ENCODE measurements at regions of chr4 and their contacts with region 1.

Region 1: GRCh38 chr4:146095091-146095690 is 80.3 kb upstream of the LSM6 start:
- DNase-seq: peak; percentile 55
- ATAC-seq: no peak
- H3K4me3 Mint-ChIP-seq: no peak overlapping the region
- H3K27ac Mint-ChIP-seq: no peak overlapping the region
- H3K4me1 Mint-ChIP-seq: no peaks in the 10 kb centered on the region
- H3K27me3 Mint-ChIP-seq: peaks cover 5% of the 10 kb centered on the region
- CTCF ChIP-seq: peak; percentile 89

Region 2: DNA sequence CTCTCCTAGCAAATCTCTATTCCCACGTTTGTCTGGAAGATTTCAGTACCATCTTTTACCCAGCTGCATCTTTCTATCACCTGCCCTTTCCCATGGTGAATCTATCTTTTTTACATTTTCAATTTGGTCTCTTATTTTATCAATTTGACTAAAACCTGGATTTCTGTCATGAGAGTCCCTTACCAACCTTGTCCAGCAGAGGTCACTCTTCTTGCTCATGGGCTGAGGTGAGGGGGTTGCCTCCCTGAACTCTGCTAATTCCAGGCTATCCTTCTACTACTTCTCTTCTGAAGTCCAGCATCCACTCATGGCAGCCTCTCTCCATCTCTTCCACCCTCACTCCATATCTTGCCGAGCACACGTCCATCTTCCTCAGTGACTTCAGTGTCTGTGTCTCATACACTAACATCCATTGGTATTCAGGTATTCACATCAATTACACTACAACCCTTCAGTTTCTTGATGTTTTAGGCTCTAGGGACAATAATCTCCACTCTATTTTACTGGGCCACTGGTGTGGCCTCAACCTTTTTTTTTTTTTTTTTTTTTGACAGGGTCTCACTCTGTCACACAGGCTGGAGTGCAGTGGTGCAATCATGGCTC is 138.8 kb before region 1 on chr4:
- CTCF ChIA-PET with region 1: no interaction called
- POLR2A ChIA-PET with region 1: no interaction called
- intact Hi-C with region 1: no loop called
- DNase-seq: peak; percentile 56
- ATAC-seq: peak; percentile 55
- H3K4me3 Mint-ChIP-seq: no peak overlapping the region
- H3K27ac Mint-ChIP-seq: no peak overlapping the region
- H3K4me1 Mint-ChIP-seq: peaks cover 2% of the 10 kb centered on the region
- H3K27me3 Mint-ChIP-seq: peaks cover 5% of the 10 kb centered on the region
- CTCF ChIP-seq: peak; percentile 74

Region 3: DNA sequence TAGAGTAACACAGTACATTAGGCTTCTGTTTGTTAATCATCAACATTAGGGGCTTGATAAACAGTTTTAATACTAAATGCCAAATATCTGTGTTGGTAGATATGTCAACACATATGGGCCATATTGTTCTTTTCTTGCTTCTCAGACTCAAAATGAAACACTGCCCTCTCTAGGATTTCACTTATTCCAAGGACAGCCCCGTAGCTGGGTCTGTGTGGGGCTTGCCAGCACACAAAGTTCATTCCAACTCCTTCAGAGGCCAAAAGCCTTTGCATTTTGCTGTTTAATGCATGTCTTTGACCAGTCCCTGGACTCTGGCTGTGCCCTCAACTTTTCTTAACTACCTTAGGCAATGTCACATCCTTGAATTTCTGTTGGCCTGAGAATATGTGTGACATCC is 54.6 kb before region 1 on chr4:
- CTCF ChIA-PET with region 1: no interaction called
- POLR2A ChIA-PET with region 1: no interaction called
- intact Hi-C with region 1: no loop called
- DNase-seq: no peak
- ATAC-seq: no peak
- H3K4me3 Mint-ChIP-seq: no peak overlapping the region
- H3K27ac Mint-ChIP-seq: no peak overlapping the region
- H3K4me1 Mint-ChIP-seq: no peaks in the 10 kb centered on the region
- H3K27me3 Mint-ChIP-seq: peaks cover 5% of the 10 kb centered on the region
- CTCF ChIP-seq: no peak

Region 4: DNA sequence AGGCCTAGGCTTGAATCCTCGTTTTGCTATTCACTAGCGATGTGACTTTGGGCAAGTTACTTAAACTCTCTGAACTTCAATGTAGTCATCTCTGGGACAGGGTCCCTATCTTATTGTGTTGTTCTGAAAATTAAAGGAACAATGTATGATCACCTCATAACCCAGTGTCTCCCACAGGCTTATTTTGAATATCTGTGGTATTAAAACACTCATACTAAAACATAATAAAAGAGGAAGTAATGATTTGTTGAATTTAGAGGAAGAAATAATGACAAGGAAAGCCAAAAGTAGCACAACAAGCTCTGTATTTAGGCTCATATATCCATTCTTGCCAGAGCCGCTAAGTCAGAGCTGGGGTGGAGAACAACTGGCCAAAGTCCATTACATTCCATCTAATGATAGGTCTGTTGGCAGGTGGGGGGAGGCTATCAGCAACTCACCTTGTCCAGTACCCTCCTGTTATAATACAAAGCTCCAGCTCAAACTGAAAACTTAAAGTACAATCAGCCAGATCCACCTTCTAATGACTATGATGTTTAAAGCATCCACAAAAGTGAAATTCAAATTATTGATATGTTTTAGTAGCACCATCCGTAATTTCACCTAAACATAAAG is 15.8 kb after region 1 on chr4:
- CTCF ChIA-PET with region 1: interaction called, 12 read pairs
- POLR2A ChIA-PET with region 1: no interaction called
- intact Hi-C with region 1: no loop called
- DNase-seq: no peak
- ATAC-seq: no peak
- H3K4me3 Mint-ChIP-seq: no peak overlapping the region
- H3K27ac Mint-ChIP-seq: no peak overlapping the region
- H3K4me1 Mint-ChIP-seq: no peaks in the 10 kb centered on the region
- H3K27me3 Mint-ChIP-seq: peaks cover 8% of the 10 kb centered on the region
- CTCF ChIP-seq: no peak

Measured in activated CD8-positive, alpha-beta T cell treated with anti-CD3 and anti-CD28 coated beads for 36 hours (primary cell).